Motor neuron (in vitro differentiated cells): ENCODE measurements at regions of chr1 and their contacts with region 1.

Region 1: GRCh38 chr1:152917794-152918193 is 9.4 kb downstream of the IVL start:
- ATAC-seq: peak in 3 of 8 experiments; percentile 46 to 74 (median 55)
- H3K4me3 ChIP-seq: no peak overlapping the region
- H3K27ac ChIP-seq: no peak overlapping the region
- H3K4me1 ChIP-seq: no peaks in the 10 kb centered on the region

Region 2: GRCh38 chr1:153192697-153193096 is 274.9 kb after region 1 on chr1:
- in situ Hi-C with region 1: loop called in 1 of 9 experiments (anchors 25 kb)
- ATAC-seq: peak in 3 of 8 experiments; percentile 40 to 55 (median 54)
- H3K4me3 ChIP-seq: no peak overlapping the region
- H3K27ac ChIP-seq: no peak overlapping the region
- H3K4me1 ChIP-seq: no peaks in the 10 kb centered on the region

Region 3: GRCh38 chr1:153220606-153221303 is 303.0 kb after region 1 on chr1:
- in situ Hi-C with region 1: loop called in 1 of 9 experiments (anchors 25 kb)
- ATAC-seq: no peak
- H3K4me3 ChIP-seq: no peak overlapping the region
- H3K27ac ChIP-seq: no peak overlapping the region
- H3K4me1 ChIP-seq: no peaks in the 10 kb centered on the region